ENCODE measurements at regions of chr5 and their contacts with region 1.

Region 1: DNA sequence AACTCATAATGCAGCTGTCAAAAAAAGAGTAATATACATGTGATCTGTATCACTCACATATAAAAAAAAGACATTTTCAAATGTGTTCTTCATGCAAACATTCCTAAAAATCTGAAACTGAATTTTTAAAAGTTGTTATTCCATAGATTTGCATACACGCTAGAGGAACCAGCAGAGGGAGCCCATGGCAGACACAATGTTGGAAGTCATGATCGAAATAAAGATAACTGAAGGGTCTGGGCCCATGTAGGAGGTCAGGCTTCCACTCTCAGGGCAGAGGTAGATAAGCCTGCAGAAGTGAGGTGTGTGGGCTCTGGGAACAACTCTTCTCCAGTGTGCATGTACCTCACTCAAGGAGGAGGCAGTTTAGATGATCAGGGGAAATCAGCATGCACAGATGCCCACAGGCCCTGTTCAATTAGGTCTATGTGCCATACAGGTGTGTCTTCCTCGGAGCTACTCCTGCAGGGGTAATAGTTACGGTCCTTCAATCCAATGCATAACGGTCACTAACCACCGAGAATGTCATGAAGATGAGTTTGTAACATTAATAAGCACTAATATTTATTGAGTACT is 208.6 kb downstream of the EPB41L4A start:
- DNase-seq: no peak
- H3K4me3 ChIP-seq: no peak overlapping the region
- H3K27ac ChIP-seq: no peak overlapping the region
- H3K4me1 ChIP-seq: no peaks in the 10 kb centered on the region
- H3K27me3 ChIP-seq: peaks cover 2% of the 10 kb centered on the region
- CTCF ChIP-seq: peak; percentile 62 to 75

Region 2: GRCh38 chr5:112239996-112240395 is 29.5 kb after region 1 on chr5:
- CTCF ChIA-PET with region 1: no interaction called
- dilution Hi-C with region 1: no loop called
- in situ Hi-C with region 1: no loop called
- intact Hi-C with region 1: loop called (anchors 1 kb)
- DNase-seq: no peak
- H3K4me3 ChIP-seq: no peak overlapping the region
- H3K27ac ChIP-seq: no peak overlapping the region
- H3K4me1 ChIP-seq: no peaks in the 10 kb centered on the region
- H3K27me3 ChIP-seq: peaks cover 6% of the 10 kb centered on the region
- CTCF ChIP-seq: peak in 1 of 2 donors; percentile 47

Region 3: GRCh38 chr5:112419986-112420864 is 209.7 kb after region 1 on chr5:
- CTCF ChIA-PET with region 1: no interaction called
- dilution Hi-C with region 1: no loop called
- in situ Hi-C with region 1: no loop called
- intact Hi-C with region 1: loop called (anchors 1 kb)
- DNase-seq: peak; percentile 60
- H3K4me3 ChIP-seq: peak overlapping the region; percentile 52 to 57 (median 56)
- H3K27ac ChIP-seq: no peak overlapping the region
- H3K4me1 ChIP-seq: peaks cover 17% of the 10 kb centered on the region
- H3K27me3 ChIP-seq: peaks cover 18% of the 10 kb centered on the region
- CTCF ChIP-seq: peak; percentile 56 to 79

Region 4: DNA sequence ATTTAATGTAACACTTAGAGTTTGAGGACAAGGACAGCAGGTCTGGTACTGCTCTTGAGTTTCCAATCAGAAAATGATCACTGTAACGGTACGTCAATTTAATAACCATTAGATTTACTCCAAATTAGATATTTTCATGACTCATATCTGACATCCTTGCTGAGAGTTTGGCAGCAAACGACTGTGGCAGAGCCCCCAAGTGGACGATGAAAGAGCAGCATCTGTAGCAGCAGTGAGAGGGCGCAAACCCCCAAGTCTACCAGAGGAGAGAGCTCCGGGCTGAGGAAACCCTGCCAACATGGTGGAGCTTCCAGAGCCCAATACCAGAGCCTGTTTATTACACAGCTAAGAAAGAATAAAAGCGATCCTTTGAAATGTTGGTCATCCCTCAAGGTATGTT is 281.8 kb after region 1 on chr5:
- CTCF ChIA-PET with region 1: interaction called, 4 read pairs
- dilution Hi-C with region 1: no loop called
- in situ Hi-C with region 1: no loop called
- intact Hi-C with region 1: loop called (anchors 5 kb)
- DNase-seq: peak; percentile 69
- H3K4me3 ChIP-seq: no peak overlapping the region
- H3K27ac ChIP-seq: no peak overlapping the region
- H3K4me1 ChIP-seq: no peaks in the 10 kb centered on the region
- H3K27me3 ChIP-seq: no peaks in the 10 kb centered on the region
- CTCF ChIP-seq: peak; percentile 73 to 78

Region 5: DNA sequence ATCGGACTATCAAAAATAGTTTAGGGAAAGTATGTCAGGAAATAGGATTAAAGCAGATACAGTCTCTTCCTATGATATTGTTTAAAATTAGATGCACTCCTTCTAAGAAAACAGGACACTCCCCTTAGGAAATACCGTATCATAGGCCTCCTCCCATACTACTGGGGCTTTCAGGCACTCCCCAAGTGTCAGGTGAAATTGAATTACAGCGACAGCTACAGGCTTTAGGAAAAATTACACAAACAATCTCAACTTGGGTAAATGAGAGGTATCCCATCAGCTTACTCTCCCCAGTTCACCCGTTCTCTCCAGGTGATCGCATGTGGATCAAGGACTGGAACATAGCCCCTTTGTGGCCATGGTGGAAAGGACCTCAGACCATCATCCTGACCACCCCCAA is 319.0 kb after region 1 on chr5:
- CTCF ChIA-PET with region 1: no interaction called
- dilution Hi-C with region 1: loop called (anchors 25 kb)
- in situ Hi-C with region 1: loop called in 1 of 2 experiments (anchors 25 kb)
- intact Hi-C with region 1: no loop called
- DNase-seq: peak; percentile 28
- H3K4me3 ChIP-seq: no peak overlapping the region
- H3K27ac ChIP-seq: no peak overlapping the region
- H3K4me1 ChIP-seq: no peaks in the 10 kb centered on the region
- H3K27me3 ChIP-seq: no peaks in the 10 kb centered on the region
- CTCF ChIP-seq: peak; percentile 49 to 64

Region 6: DNA sequence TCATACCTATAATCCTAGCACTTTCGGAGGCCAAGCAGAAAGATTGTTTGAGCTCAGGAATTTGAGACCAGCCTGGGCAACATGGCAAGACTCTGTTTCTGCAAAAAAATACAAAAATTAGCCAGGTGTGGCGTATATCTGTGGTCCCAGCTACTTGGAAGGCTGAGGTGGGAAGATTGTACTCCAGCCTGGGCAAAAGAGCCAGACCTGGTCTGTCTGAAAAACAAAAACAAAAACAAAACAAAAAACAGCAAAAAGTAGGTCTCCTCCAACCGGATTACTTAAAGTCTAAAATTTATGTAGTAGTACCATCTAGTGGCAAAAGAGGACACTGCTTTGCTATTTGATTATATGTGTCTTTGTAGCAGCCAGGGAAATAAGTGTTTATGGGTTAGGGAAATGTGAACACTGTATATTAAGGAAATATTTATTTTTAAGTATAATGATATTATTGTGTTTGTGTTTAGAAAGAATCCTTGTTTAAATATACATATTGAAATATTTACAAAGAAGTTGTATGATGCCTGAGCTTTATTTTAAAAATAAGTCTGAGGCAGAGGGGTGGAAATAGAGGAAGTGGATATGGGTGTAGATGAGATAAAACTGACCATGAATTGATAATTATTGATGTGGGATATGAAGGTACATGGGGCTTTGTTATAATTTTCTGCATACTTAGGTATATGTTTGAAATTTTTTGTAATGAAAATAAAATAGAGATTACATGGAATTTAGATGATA is 547.1 kb after region 1 on chr5:
- CTCF ChIA-PET with region 1: no interaction called
- dilution Hi-C with region 1: no loop called
- in situ Hi-C with region 1: loop called (anchors 25 kb)
- intact Hi-C with region 1: no loop called
- DNase-seq: peak; percentile 34
- H3K4me3 ChIP-seq: no peak overlapping the region
- H3K27ac ChIP-seq: no peak overlapping the region
- H3K4me1 ChIP-seq: peaks cover 4% of the 10 kb centered on the region
- H3K27me3 ChIP-seq: no peaks in the 10 kb centered on the region
- CTCF ChIP-seq: peak; percentile 71 to 82

Measured in mammary epithelial cell (primary cell).